Activated T-helper 1 cell treated with anti-CD3 and anti-CD28 coated beads, Interleukin-12 subunit alpha, Interleukin-12 subunit beta, Interleukin-2, Interleukin-4 antibody, amounts not matched to agents 30 ng/mL and 10 ng/mL and 1 ng/mL, durations not matched to agents 14 hours and 24 hours and 36 hours (primary cell): ENCODE measurements at regions of chr12 and their contacts with region 1.

Region 1: DNA sequence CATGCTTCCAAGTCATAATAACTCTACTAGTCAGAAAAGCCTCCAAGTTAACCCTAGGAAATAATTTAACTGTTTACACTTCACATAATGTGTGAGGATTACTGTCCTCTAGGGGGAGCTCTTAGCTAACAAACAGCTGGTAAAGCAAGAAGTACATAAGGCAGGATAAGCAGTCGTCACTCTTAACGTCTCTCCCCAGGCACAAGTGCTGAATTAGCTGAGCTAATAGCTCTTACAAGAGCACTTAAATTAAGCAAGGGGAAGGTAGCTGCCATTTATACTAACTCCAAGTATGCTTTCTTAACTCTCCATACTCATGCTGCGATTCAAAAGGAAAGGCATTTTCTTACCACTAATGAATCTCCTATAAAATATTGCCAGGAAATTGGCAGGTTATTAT is 79.3 kb upstream of the TSPAN11 start:
- DNase-seq: peak; percentile 24
- H3K4me3 Mint-ChIP-seq: no peak overlapping the region
- H3K27ac Mint-ChIP-seq: no peak overlapping the region
- H3K4me1 Mint-ChIP-seq: peaks cover 11% of the 10 kb centered on the region
- H3K27me3 Mint-ChIP-seq: peaks cover 8% of the 10 kb centered on the region

Region 2: GRCh38 chr12:29519585-29520182 is 1327.6 kb before region 1 on chr12:
- intact Hi-C with region 1: loop called (anchors 1 kb)
- DNase-seq: no peak
- H3K4me3 Mint-ChIP-seq: no peak overlapping the region
- H3K27ac Mint-ChIP-seq: no peak overlapping the region
- H3K4me1 Mint-ChIP-seq: no peaks in the 10 kb centered on the region
- H3K27me3 Mint-ChIP-seq: peaks cover 5% of the 10 kb centered on the region

Region 3: GRCh38 chr12:30754709-30755394 is 92.4 kb before region 1 on chr12 and contains the start of gene CAPRIN2:
- intact Hi-C with region 1: loop called (anchors 1 kb)
- DNase-seq: peak; percentile 94
- H3K4me3 Mint-ChIP-seq: peak within 1 kb of the TSS; percentile 94
- H3K27ac Mint-ChIP-seq: peak within 1 kb of the TSS; percentile 82
- H3K4me1 Mint-ChIP-seq: peaks cover 24% of the 10 kb centered on the region
- H3K27me3 Mint-ChIP-seq: peaks cover 6% of the 10 kb centered on the region
- total RNA-seq, gene CAPRIN2: 9.1 and 9.4 TPM in 2 replicates

Region 4: DNA sequence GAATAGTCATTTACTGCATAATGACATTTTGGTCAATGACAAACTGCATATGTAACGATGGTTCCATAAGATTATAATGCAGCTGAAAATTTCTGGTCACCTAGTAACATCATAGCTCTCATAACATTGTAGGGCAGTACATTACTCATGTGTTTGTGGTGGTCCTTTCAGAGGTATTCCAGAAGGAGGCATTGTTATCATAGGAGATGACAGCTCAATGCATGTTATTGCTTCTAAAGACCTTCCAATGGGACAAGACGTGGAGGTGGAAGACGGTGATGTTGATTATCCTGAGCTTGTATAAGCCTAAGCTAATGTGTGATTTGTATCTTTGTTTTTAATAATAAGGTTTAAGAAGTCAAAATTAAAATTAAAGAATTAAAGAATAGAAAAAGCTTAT is 35.4 kb after region 1 on chr12:
- intact Hi-C with region 1: no loop called
- DNase-seq: no peak
- H3K4me3 Mint-ChIP-seq: no peak overlapping the region
- H3K27ac Mint-ChIP-seq: no peak overlapping the region
- H3K4me1 Mint-ChIP-seq: no peaks in the 10 kb centered on the region
- H3K27me3 Mint-ChIP-seq: peaks cover 10% of the 10 kb centered on the region

Region 5: DNA sequence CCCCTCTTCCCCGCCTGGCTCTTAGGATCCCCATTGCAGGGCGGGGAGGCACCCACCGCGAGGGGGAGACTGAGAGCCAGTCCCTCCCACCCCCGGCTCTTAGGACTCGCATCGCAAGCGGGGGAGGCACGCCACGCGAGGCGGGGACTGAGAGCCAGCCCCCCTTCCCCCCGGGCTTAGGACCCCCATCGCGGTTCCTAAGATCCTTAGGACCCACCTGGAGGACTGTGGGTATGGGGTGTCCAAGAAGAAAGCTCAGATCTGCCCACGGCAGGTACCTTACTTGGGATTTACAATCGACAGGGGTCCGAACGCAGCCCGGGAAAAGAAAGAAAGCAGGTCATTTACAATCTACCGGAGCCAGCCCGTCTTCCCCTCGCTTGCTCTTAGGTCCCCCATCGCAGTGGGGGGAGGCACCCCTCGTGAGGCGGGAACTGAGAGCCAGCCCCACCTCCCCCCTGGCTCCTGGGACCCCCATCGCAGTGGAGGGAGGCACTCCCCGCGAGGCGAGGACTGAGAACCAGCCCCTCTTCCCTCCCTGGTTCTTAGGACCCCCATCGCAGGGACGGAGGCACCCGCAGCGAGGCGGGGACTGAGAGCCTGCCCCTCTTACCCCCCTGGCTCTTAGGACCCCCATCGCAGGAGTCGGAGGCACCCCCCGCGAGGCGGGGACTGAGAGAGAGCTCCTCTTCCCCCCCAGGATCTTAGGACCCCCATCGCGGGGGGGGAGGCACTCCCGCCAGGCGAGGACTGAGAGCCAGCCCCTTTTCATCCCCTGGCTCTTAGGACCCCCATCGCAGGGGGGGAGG is 270.1 kb after region 1 on chr12:
- intact Hi-C with region 1: loop called (anchors 2 kb)
- DNase-seq: peak; percentile 23
- H3K4me3 Mint-ChIP-seq: peak overlapping the region; percentile 60
- H3K27ac Mint-ChIP-seq: no peak overlapping the region
- H3K4me1 Mint-ChIP-seq: no peaks in the 10 kb centered on the region
- H3K27me3 Mint-ChIP-seq: peaks cover 31% of the 10 kb centered on the region

Region 6: DNA sequence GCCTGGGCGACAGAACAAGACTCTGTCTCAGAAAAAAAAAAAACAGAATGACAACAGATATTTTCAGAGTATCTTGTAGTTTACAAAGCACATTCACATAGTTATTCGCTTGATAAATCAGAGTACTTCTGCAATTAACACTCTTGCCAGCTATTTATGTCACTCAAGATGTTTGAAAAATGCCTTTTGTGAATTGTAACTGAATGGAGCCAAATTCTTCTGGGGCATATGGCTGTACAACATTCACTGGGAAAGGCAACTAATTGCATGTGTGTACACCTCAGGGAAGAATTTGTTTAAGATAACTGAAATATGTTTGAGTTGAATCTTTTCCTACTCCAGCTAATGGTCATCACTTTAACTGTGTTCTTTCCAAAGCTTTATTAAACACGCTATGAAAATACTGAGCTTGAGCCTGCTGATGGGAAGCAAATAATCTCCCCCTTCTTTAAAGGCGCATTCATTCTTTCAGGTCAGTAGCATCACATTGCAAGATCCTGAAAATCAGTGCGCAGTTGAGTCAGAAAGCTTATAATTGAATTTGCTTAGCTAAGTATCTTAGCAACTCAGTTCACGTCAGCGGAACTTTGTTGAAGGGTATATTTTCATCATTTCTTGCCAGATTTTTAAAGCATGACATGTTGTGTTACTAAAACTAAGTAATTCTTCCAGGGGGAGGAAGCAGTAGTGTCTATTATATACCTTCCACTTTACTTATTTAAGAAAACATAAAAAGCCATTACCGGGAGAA is 412.1 kb after region 1 on chr12:
- intact Hi-C with region 1: loop called (anchors 5 kb)
- DNase-seq: no peak
- H3K4me3 Mint-ChIP-seq: no peak overlapping the region
- H3K27ac Mint-ChIP-seq: no peak overlapping the region
- H3K4me1 Mint-ChIP-seq: no peaks in the 10 kb centered on the region
- H3K27me3 Mint-ChIP-seq: peaks cover 11% of the 10 kb centered on the region

Region 7: DNA sequence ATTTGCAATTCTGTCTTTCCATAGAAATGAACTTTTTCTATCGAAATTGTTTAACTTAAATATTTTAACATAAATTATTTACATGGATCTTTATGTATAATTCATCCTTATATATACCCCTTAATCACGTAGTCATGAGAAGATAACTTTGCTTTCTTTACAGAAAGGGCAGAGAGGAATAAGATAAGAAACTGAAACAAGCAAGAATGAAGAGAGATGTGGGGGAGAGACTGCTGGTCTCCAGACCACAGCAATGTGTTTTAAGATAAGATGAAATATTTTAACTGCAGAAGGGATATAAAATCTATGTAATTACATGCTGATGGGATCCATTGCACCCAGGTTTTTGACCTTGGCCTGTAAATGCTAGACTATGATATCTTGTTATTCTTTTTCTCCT is 1797.2 kb after region 1 on chr12:
- intact Hi-C with region 1: no loop called
- DNase-seq: no peak
- H3K4me3 Mint-ChIP-seq: no peak overlapping the region
- H3K27ac Mint-ChIP-seq: no peak overlapping the region
- H3K4me1 Mint-ChIP-seq: no peaks in the 10 kb centered on the region
- H3K27me3 Mint-ChIP-seq: peaks cover 2% of the 10 kb centered on the region